Upper lobe of right lung (tissue), 1 donor: ENCODE measurements at regions of chr4 and their contacts with region 1.

Region 1: DNA sequence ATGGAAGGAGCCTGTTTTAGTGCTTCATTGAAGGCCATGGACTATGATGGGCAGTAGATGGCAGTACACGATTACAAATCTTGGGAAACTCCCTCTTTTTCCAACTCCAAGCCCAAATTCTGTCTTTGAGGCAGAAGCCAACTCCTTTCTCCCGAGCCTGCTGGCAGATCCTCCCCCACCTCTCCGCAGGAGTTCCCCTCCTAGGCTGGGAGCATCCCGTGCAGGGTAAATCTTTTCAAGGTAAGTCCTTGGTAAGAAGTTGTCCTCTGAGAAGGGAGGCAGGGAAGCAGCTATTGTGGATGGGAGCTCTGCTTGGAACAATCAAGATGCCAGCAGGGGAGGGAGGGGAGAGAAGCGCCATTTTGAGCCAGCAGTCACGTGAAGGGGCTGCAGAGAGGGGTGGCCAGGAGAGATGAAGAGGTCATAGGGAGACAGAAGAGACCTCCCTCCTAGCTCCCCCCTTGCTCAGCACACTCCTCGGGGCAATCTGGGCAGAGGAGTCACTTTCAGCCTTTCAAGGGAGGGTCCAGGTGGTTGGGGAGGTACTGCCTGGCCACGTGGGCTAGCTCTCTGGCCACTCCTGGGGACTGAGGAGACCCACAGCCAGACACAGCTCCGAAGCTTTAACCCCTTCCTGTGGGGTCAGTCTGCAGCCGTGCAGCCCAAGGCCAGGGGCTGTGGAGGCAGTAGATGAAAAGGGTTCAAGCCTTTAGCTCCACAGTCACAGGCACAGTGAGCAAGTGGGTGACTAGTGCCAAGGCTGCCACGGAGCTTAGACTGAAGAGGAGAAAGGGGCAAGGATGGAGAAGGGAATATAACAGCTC is 9.6 kb downstream of the CC2D2A start:
- DNase-seq: peak; percentile 72
- ATAC-seq: peak; percentile 92
- H3K4me3 ChIP-seq: peak overlapping the region; percentile 57
- H3K27ac ChIP-seq: peak overlapping the region; percentile 71
- H3K4me1 ChIP-seq: no peaks in the 10 kb centered on the region
- H3K27me3 ChIP-seq: no peaks in the 10 kb centered on the region
- CTCF ChIP-seq: peak; percentile 63

Region 2: DNA sequence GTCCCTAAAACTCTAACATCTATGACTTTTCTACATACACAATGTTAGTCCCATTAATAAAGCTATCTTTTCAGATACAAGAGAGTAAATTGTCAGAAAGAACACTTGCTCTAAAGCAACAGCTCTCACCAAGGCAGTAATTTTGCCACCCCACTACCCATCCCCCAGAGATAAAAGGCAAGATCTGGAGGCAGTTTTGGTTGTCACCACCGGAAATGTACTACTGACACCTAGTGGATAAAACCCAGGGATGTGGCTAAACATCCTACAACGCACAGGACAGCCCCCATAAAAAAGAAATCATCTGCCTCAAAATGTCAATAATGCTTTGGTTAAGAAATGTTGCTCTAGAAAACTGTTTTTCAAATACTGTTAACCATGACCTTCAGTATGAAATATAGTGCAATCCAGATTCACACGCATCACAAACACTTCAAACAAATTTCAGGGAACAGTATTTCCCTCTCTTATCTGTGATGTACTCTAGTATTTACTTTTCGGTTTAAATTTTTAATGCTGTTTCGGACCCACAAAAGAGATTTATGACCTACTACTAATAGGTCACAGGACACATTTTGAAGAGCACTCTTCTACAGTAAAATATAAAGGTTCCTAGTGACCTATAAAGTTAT is 170.7 kb after region 1 on chr4:
- intact Hi-C with region 1: loop called (anchors 5 kb)
- DNase-seq: no peak
- ATAC-seq: peak; percentile 84
- H3K4me3 ChIP-seq: no peak overlapping the region
- H3K27ac ChIP-seq: no peak overlapping the region
- H3K4me1 ChIP-seq: peaks cover 52% of the 10 kb centered on the region
- H3K27me3 ChIP-seq: no peaks in the 10 kb centered on the region
- CTCF ChIP-seq: peak; percentile 71

Region 3: DNA sequence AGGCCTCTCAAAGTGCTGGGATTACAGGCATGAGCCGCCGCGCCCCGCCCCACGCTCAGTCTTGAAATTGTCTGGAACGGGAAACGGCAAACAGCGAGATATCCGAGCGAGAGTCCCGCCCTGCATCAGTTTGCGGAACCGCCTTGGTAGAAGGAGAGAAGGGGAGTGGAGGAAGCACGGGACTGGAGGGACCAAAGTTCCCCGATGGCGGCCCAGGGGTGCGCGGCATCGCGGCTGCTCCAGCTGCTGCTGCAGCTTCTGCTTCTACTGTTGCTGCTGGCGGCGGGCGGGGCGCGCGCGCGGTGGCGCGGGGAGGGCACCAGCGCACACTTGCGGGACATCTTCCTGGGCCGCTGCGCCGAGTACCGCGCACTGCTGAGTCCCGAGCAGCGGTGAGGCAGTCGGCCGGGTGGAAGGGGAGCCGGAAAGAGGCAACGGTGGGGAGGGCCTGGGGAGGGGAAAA is 223.7 kb after region 1 on chr4 and contains the start of gene BST1:
- intact Hi-C with region 1: no loop called
- DNase-seq: peak; percentile 87
- ATAC-seq: peak; percentile 93
- H3K4me3 ChIP-seq: peak within 1 kb of the TSS; percentile 50
- H3K27ac ChIP-seq: peak within 1 kb of the TSS; percentile 68
- H3K4me1 ChIP-seq: peaks cover 7% of the 10 kb centered on the region
- H3K27me3 ChIP-seq: no peaks in the 10 kb centered on the region
- CTCF ChIP-seq: no peak
- total RNA-seq, gene BST1: 11.0 TPM